ENCODE measurements at regions of chr12 and their contacts with region 1.

Region 1: GRCh38 chr12:46124848-46125619 is 134.7 kb upstream of the SCAF11 start:
- DNase-seq: peak; percentile 60
- H3K4me3 Mint-ChIP-seq: peak overlapping the region; percentile 34
- H3K27ac Mint-ChIP-seq: peak overlapping the region; percentile 21
- H3K4me1 Mint-ChIP-seq: peaks cover 5% of the 10 kb centered on the region
- H3K27me3 Mint-ChIP-seq: peaks cover 12% of the 10 kb centered on the region

Region 2: GRCh38 chr12:46071769-46072624 is 53.0 kb before region 1 on chr12:
- CTCF ChIA-PET with region 1: interaction called, 14 read pairs
- POLR2A ChIA-PET with region 1: no interaction called
- intact Hi-C with region 1: no loop called
- DNase-seq: peak; percentile 74
- H3K4me3 Mint-ChIP-seq: no peak overlapping the region
- H3K27ac Mint-ChIP-seq: no peak overlapping the region
- H3K4me1 Mint-ChIP-seq: peaks cover 3% of the 10 kb centered on the region
- H3K27me3 Mint-ChIP-seq: no peaks in the 10 kb centered on the region

Region 3: DNA sequence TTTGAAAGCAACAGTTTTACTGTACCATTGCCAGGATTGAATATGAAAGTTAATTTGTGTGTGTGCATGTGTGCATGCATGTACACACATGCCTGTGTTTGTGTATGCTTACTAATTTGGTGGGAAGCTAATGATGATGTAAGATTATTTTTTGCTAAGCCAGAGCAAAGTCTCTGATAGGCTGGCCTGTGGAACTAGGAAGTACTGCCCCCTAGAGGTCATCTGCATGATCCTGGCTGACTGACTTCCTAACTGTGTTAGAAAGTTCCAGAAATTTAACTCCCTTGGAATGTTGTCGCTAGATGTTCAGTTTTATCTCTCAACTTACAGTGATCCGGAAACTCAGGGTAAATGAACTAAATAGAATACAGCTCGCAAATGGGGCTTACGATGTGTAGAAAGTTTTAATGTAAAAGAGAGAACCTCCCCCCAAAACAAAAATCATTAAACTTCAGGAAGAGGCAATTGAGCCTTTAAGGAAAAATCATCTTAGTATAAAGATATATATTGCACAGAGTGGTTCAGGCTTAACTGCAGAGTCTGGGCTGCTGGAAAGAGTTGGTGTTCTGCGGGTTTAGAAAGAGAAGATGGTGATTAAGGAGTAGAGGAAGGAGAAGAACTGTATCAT is 178.1 kb after region 1 on chr12:
- CTCF ChIA-PET with region 1: interaction called, 97 read pairs
- POLR2A ChIA-PET with region 1: no interaction called
- intact Hi-C with region 1: loop called (anchors 1 kb)
- DNase-seq: peak; percentile 51
- H3K4me3 Mint-ChIP-seq: no peak overlapping the region
- H3K27ac Mint-ChIP-seq: no peak overlapping the region
- H3K4me1 Mint-ChIP-seq: peaks cover 3% of the 10 kb centered on the region
- H3K27me3 Mint-ChIP-seq: no peaks in the 10 kb centered on the region

Region 4: GRCh38 chr12:46675736-46676135 is 550.7 kb after region 1 on chr12:
- CTCF ChIA-PET with region 1: interaction called, 11 read pairs
- POLR2A ChIA-PET with region 1: no interaction called
- intact Hi-C with region 1: no loop called
- DNase-seq: no peak
- H3K4me3 Mint-ChIP-seq: no peak overlapping the region
- H3K27ac Mint-ChIP-seq: no peak overlapping the region
- H3K4me1 Mint-ChIP-seq: peaks cover 6% of the 10 kb centered on the region
- H3K27me3 Mint-ChIP-seq: peaks cover 3% of the 10 kb centered on the region

Region 5: DNA sequence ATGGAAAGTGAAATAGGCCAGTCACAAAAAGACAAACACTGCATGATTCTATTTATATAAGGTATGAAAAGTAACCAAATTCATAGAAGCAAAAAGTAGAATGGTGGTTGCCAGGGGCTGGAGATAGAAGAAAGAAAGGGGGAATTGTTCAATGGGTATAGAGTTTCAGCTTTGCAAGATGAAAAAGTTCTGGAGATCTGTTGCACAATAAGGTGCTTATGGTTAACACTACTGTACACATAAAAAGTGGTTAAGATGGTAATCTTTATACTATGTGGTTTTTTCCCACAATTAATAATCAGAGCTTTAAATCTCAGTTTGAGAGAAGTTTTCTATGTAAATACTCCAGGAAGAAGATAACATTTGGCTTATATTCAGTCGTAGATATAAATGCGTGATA is 627.4 kb after region 1 on chr12:
- CTCF ChIA-PET with region 1: no interaction called
- POLR2A ChIA-PET with region 1: no interaction called
- intact Hi-C with region 1: no loop called
- DNase-seq: no peak
- H3K4me3 Mint-ChIP-seq: no peak overlapping the region
- H3K27ac Mint-ChIP-seq: no peak overlapping the region
- H3K4me1 Mint-ChIP-seq: peaks cover 12% of the 10 kb centered on the region
- H3K27me3 Mint-ChIP-seq: peaks cover 3% of the 10 kb centered on the region

Region 6: GRCh38 chr12:46983393-46984266 is 858.6 kb after region 1 on chr12:
- CTCF ChIA-PET with region 1: interaction called, 19 read pairs
- POLR2A ChIA-PET with region 1: no interaction called
- intact Hi-C with region 1: no loop called
- DNase-seq: peak; percentile 40
- H3K4me3 Mint-ChIP-seq: no peak overlapping the region
- H3K27ac Mint-ChIP-seq: no peak overlapping the region
- H3K4me1 Mint-ChIP-seq: peaks cover 8% of the 10 kb centered on the region
- H3K27me3 Mint-ChIP-seq: peaks cover 16% of the 10 kb centered on the region